ENCODE measurements at regions of chr16 and their contacts with region 1.

Region 1: DNA sequence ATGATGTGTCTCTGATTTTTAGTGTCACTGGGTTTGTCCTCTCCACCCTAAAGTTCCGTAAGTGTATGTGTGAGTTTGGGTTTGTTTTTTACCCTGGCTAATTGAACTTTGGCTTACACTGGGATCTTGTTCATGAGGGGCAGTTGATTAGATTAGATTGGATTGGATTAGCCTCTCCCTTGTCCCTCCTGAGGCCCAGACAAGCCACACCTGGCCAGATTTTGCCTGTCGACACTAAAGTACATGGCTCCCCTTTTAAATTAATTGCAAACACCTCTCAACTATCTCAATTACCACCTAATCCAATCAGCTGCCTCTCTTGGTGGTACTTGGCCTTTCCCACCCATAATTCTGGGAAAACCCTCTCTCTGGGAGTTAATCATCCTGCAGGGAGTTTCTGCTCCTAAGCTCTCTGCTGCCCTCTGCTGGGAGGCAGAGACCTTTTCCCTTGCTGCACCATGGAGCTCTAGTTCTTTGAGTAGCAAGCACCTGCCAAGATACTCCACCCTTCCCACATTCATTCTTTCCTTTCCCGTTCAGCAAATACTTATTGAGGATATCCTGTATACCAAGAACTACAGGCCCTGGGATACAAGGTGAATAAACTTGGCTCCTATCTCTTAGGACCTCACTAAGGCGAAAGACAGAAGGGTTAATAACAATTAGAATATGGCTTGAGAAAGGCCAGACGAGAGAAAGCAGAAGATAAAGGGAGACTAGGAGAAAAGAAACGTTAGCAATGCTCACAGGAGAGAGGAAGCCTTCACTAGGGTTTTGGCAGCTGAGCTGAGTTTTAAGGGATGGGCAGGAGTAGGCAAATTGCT is 60.0 kb upstream of the MPHOSPH6 start:
- DNase-seq: peak; percentile 33 to 53 (median 41)
- H3K4me3 ChIP-seq: no peak overlapping the region
- H3K4me3 Mint-ChIP-seq: no peak overlapping the region
- H3K27ac ChIP-seq: no peak overlapping the region
- H3K27ac Mint-ChIP-seq: no peak overlapping the region
- H3K4me1 ChIP-seq: no peaks in the 10 kb centered on the region
- H3K4me1 Mint-ChIP-seq: no peaks in the 10 kb centered on the region
- H3K27me3 ChIP-seq: no peaks in the 10 kb centered on the region
- H3K27me3 Mint-ChIP-seq: peaks cover 4 to 5% of the 10 kb centered on the region in 2 donors

Region 2: DNA sequence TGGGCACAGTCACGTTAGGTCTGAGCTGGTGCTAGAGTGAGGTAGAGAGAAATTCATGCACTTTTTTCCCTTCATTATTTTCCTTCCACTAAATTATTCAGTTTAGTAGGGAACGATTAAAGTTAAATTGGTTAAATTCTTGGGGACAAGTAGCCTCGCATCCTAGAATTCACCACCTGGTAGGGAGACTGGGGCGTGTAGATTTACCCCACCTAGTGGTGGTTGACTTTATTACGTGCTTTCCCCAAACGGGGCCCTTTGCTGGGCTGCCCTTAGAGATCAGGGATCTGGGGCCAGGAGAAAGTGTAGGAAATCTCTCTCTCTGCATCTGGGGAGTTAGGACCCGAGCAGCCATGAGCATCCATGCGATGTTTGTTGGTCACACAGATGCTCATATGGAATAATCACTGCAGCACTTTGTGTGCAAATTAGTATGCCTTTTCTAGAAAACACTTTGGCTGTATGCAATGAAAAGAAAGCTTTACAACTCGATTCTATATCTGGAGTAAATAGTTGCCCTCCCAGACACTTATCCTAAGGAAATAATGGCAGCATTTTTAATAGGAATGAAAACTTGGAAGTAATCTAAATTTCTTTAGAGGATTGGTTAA is 343.9 kb before region 1 on chr16:
- CTCF ChIA-PET with region 1: interaction called, 79 read pairs
- POLR2A ChIA-PET with region 1: no interaction called
- intact Hi-C with region 1: no loop called
- DNase-seq: no peak
- H3K4me3 ChIP-seq: no peak overlapping the region
- H3K4me3 Mint-ChIP-seq: no peak overlapping the region
- H3K27ac ChIP-seq: no peak overlapping the region
- H3K27ac Mint-ChIP-seq: no peak overlapping the region
- H3K4me1 ChIP-seq: no peaks in the 10 kb centered on the region
- H3K4me1 Mint-ChIP-seq: no peaks in the 10 kb centered on the region
- H3K27me3 ChIP-seq: no peaks in the 10 kb centered on the region
- H3K27me3 Mint-ChIP-seq: peaks cover 0 to 2% of the 10 kb centered on the region in 2 donors

Region 3: DNA sequence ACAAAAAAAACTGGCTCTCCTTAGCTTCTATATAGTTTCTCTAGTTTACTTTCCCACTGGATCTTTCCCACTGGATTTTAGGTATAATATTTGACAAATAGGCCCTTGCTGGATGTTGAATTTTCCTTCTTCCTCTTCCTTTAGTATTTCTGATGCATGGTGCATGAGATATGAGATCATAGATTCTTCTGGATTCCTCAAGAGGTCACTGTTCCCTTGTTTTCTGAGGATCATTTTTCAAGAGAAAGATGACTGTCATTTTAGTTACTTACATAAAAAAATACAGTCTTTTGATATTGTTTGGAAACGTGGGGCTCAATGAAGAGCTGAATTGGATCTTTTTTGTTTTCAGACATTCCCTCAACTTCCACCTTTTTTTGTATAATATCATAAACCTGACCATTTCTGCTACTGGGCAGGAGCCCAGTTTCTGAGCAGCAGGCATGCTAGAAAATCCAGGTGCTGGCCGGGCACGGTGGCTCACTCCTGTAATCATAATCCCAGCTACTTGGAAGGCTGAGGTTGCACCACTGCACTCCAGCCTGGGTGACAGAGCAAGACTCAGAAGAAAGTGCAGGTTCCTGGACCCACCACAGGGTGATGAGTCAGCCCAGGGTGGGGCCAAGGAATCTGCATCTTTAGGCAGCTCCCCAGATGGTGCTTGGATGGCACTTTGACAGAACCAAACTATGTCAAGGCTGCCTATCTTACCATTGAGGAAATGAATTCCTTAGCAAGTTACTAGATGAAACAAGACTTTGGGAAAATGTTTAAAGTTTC is 289.0 kb before region 1 on chr16:
- CTCF ChIA-PET with region 1: interaction called, 35 read pairs
- POLR2A ChIA-PET with region 1: no interaction called
- intact Hi-C with region 1: loop called (anchors 1 kb)
- DNase-seq: peak in 3 of 5 donors; percentile 15 to 26 (median 16)
- H3K4me3 ChIP-seq: no peak overlapping the region
- H3K4me3 Mint-ChIP-seq: no peak overlapping the region
- H3K27ac ChIP-seq: no peak overlapping the region
- H3K27ac Mint-ChIP-seq: no peak overlapping the region
- H3K4me1 ChIP-seq: no peaks in the 10 kb centered on the region
- H3K4me1 Mint-ChIP-seq: no peaks in the 10 kb centered on the region
- H3K27me3 ChIP-seq: no peaks in the 10 kb centered on the region
- H3K27me3 Mint-ChIP-seq: no peaks in the 10 kb centered on the region

Region 4: DNA sequence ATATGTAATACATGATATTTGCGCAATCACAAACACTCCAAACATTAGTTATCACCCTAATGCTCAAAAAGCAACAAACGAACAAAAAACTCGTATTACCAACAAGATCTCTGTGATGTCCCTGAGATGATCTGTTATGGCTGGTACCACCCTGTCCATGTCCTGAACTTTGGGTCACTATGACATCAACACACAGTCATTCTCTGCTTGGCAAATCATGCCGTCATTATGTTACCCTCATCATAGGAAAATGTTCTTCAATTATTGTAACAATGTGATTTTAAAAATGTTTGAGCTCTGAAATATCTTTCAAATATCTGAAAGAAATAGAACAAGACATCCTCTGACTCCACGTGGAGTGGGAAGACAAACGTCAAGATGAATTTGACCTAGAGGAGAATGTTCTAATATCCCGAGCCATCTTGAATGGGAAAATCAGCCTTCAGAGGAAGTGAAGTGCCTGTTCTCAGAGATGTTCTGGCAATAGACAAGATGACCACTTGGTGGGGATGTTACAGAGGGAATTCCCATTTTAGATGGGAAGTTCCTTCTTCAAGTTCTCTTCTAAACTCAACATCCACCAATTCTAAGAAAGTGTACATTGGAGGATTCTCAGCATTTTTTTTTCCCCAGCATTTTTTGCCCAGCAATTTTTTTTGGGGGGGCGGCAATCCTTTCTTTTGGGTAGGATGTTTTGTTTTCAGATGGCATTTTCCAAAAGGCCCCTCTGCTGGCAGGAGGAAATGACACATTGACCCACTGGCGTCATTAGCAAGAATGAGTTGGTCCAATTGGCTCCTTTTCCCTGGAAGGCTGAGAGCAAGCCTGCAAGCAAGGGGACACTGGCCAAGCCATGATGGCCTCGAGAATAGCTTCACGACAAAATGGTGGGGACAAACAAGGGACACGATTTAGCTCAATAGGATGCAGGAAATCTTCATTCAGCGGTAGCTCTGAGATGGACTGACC is 198.6 kb before region 1 on chr16:
- CTCF ChIA-PET with region 1: interaction called, 18 read pairs
- POLR2A ChIA-PET with region 1: no interaction called
- intact Hi-C with region 1: no loop called
- DNase-seq: no peak
- H3K4me3 ChIP-seq: no peak overlapping the region
- H3K4me3 Mint-ChIP-seq: no peak overlapping the region
- H3K27ac ChIP-seq: no peak overlapping the region
- H3K27ac Mint-ChIP-seq: peak overlapping the region in 1 of 7 donors; percentile 21
- H3K4me1 ChIP-seq: no peaks in the 10 kb centered on the region
- H3K4me1 Mint-ChIP-seq: peaks cover 0 to 1% (median 0%) of the 10 kb centered on the region in 4 donors
- H3K27me3 ChIP-seq: no peaks in the 10 kb centered on the region
- H3K27me3 Mint-ChIP-seq: peaks cover 7 to 13% of the 10 kb centered on the region in 2 donors

Region 5: DNA sequence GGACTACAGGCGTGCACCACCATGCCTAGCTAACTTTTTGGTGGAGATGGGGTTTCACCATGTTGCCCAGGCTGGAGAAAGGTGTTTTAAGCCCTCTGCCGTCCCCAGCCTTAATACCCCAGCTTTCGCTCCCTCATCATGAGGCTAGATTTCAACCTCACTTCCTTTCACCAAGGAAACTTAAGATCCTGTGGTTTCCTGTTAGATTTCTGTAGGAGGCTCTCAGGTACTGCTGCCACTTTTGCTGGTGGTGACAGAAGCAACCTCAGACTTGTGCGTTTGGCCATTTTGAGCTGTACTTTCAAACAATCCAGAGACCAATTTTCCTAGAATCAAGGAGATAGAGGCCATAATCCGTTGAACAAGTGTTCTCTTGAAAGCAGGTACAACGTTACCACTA is 96.2 kb before region 1 on chr16:
- CTCF ChIA-PET with region 1: interaction called, 9 read pairs
- POLR2A ChIA-PET with region 1: no interaction called
- intact Hi-C with region 1: loop called (anchors 5 kb)
- DNase-seq: peak; percentile 18 to 39 (median 31)
- H3K4me3 ChIP-seq: peak overlapping the region in 1 of 2 donors; percentile 36
- H3K4me3 Mint-ChIP-seq: peak overlapping the region; percentile 51 to 84 (median 66)
- H3K27ac ChIP-seq: no peak overlapping the region
- H3K27ac Mint-ChIP-seq: peak overlapping the region; percentile 20 to 93 (median 73)
- H3K4me1 ChIP-seq: peaks cover 19% of the 10 kb centered on the region
- H3K4me1 Mint-ChIP-seq: peaks cover 13 to 29% (median 19%) of the 10 kb centered on the region in 4 donors
- H3K27me3 ChIP-seq: no peaks in the 10 kb centered on the region
- H3K27me3 Mint-ChIP-seq: no peaks in the 10 kb centered on the region

Region 6: DNA sequence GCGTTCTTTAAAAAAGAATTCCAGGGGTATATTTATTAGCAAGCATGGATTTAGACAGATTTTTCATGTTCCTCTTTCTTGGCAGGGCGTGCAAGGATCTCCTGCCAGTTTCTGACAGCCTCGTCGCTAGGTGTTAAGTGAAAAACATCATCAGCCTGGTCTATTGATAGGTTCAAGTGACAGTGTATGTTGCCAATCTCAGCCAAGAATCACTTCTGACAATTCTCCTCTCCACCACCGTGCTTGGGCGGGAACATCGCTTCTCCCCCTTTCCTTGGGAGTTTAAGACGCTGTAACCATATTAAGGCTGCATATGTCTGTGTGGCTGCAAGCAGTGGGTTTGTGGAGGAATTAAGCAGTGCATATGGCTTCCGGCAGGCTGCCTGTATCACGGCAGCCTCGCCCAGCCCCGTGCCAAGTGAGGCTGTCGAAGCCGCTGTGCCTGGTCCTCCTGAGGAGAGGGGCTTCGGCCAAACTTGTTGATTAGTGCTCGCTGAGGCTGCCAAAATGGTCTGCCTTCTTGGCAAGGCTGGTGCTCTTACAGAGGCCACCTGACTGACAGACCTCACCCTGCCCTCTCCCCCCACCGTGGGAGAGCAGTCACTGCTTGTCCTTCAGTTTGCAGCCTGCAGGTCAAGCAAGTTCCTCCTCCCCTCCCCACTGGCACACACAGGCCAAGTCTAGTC is 72.2 kb after region 1 on chr16:
- CTCF ChIA-PET with region 1: no interaction called
- POLR2A ChIA-PET with region 1: no interaction called
- intact Hi-C with region 1: no loop called
- DNase-seq: no peak
- H3K4me3 ChIP-seq: no peak overlapping the region
- H3K4me3 Mint-ChIP-seq: no peak overlapping the region
- H3K27ac ChIP-seq: no peak overlapping the region
- H3K27ac Mint-ChIP-seq: no peak overlapping the region
- H3K4me1 ChIP-seq: no peaks in the 10 kb centered on the region
- H3K4me1 Mint-ChIP-seq: no peaks in the 10 kb centered on the region
- H3K27me3 ChIP-seq: no peaks in the 10 kb centered on the region
- H3K27me3 Mint-ChIP-seq: peaks cover 0 to 2% of the 10 kb centered on the region in 2 donors

Region 7: DNA sequence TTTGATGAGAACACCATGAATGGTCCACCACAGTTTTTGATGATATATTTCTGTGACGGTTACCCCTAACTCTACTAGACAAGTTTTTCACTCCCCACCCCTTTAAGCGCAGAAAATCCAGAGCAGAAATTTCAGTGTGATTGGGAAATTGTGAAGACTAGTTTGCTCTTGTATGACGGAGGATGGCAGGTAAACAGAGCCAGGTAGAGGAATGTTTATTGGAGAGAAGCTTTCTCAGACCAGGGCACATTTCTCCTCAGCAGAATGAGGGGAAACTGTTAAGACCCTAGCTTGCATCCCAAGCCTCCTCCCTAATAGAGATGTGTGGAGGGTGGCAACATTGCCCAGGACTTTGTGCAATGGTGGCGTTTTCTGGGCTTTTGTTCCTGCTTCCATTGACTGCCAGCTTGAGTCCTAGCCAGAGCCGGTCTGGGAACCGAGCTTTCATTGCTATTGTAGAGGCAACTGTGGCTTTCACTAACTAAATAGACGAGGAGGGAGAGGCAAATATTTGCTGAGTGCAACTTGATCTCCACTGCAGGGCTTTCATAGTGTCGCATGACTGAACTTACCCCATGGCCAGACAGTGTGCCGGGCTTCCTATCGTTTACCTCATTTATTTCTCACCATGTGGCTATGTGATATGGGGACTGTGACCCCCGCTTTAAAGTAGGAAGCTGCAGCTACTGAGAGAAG is 99.6 kb after region 1 on chr16:
- CTCF ChIA-PET with region 1: no interaction called
- POLR2A ChIA-PET with region 1: no interaction called
- intact Hi-C with region 1: no loop called
- DNase-seq: no peak
- H3K4me3 ChIP-seq: no peak overlapping the region
- H3K4me3 Mint-ChIP-seq: no peak overlapping the region
- H3K27ac ChIP-seq: no peak overlapping the region
- H3K27ac Mint-ChIP-seq: no peak overlapping the region
- H3K4me1 ChIP-seq: no peaks in the 10 kb centered on the region
- H3K4me1 Mint-ChIP-seq: no peaks in the 10 kb centered on the region
- H3K27me3 ChIP-seq: no peaks in the 10 kb centered on the region
- H3K27me3 Mint-ChIP-seq: peaks cover 2 to 9% of the 10 kb centered on the region in 2 donors

Region 8: DNA sequence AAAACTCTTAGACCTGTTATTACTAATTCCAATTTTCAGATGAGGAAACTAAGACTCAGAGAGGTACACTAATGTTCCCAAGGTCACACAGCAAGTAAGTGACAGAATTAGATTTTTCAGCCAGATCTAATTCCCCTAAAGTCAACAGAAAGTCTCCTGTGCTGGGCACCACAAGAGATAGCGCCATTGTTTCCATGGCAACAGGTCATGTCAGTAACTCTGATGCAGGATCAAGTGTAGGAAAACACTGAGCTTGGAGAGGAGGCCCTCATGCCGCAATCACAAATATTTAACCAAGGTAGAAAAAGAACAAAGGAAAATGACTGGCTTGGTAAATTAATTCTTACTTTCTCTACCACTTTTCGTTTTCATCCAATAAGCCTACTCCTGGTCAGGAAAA is 230.8 kb after region 1 on chr16:
- CTCF ChIA-PET with region 1: no interaction called
- POLR2A ChIA-PET with region 1: no interaction called
- intact Hi-C with region 1: no loop called
- DNase-seq: no peak
- H3K4me3 ChIP-seq: no peak overlapping the region
- H3K4me3 Mint-ChIP-seq: no peak overlapping the region
- H3K27ac ChIP-seq: no peak overlapping the region
- H3K27ac Mint-ChIP-seq: no peak overlapping the region
- H3K4me1 ChIP-seq: no peaks in the 10 kb centered on the region
- H3K4me1 Mint-ChIP-seq: peaks cover 0 to 4% (median 0%) of the 10 kb centered on the region in 4 donors
- H3K27me3 ChIP-seq: no peaks in the 10 kb centered on the region
- H3K27me3 Mint-ChIP-seq: peaks cover 4 to 8% of the 10 kb centered on the region in 2 donors